IMR-90 (cell line): ENCODE measurements at regions of chr4 and their contacts with region 1.

Region 1: GRCh38 chr4:74133786-74134499 is 24.0 kb upstream of the MTHFD2L start:
- DNase-seq: peak; percentile 86
- ATAC-seq: peak; percentile 99
- H3K4me3 ChIP-seq: no peak overlapping the region
- H3K27ac ChIP-seq: no peak overlapping the region
- H3K4me1 ChIP-seq: no peaks in the 10 kb centered on the region
- H3K27me3 ChIP-seq: no peaks in the 10 kb centered on the region; the same call in 1 of the 2 replicates
- CTCF ChIP-seq: peak; percentile 94
- POLR2A ChIP-seq: peak; percentile 65
- RAD21 ChIP-seq: peak; percentile 97

Region 2: DNA sequence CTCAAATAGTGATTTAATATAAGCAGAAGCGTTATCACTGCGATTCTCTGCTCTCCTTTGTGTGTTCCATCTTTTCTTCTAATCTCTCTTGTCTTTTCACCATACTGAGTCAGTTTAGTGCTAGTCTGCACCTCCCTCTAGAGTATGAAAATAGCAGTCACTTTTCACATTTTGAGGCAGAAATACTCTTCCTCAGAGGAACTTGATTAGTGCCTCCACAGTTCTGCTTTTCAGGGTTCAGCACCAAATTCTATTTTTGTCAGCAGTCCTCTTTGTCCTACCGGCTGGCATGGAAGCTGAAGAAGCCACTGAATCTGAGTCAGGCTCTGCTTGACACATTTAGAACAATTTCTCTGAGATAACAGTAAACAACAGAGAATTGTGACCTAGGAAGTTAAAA is 825.7 kb before region 1 on chr4:
- CTCF ChIA-PET with region 1: no interaction called
- POLR2A ChIA-PET with region 1: no interaction called
- dilution Hi-C with region 1: no loop called
- in situ Hi-C with region 1: no loop called
- intact Hi-C with region 1: loop called (anchors 5 kb)
- DNase-seq: peak; percentile 61
- ATAC-seq: peak; percentile 59
- H3K4me3 ChIP-seq: no peak overlapping the region
- H3K27ac ChIP-seq: peak overlapping the region; percentile 84
- H3K4me1 ChIP-seq: peaks cover 4% of the 10 kb centered on the region
- H3K27me3 ChIP-seq: no peaks in the 10 kb centered on the region
- CTCF ChIP-seq: peak; percentile 64
- POLR2A ChIP-seq: no peak
- RAD21 ChIP-seq: peak; percentile 75

Region 3: GRCh38 chr4:73573794-73574406 is 560.0 kb before region 1 on chr4:
- CTCF ChIA-PET with region 1: interaction called, 4 read pairs
- POLR2A ChIA-PET with region 1: no interaction called
- dilution Hi-C with region 1: no loop called
- in situ Hi-C with region 1: no loop called
- intact Hi-C with region 1: loop called (anchors 1 kb)
- DNase-seq: peak; percentile 82
- ATAC-seq: peak; percentile 98
- H3K4me3 ChIP-seq: no peak overlapping the region
- H3K27ac ChIP-seq: no peak overlapping the region
- H3K4me1 ChIP-seq: no peaks in the 10 kb centered on the region
- H3K27me3 ChIP-seq: peaks cover 2% of the 10 kb centered on the region; the same call in 1 of the 2 replicates
- CTCF ChIP-seq: peak; percentile 88
- POLR2A ChIP-seq: no peak
- RAD21 ChIP-seq: peak; percentile 80

Region 4: DNA sequence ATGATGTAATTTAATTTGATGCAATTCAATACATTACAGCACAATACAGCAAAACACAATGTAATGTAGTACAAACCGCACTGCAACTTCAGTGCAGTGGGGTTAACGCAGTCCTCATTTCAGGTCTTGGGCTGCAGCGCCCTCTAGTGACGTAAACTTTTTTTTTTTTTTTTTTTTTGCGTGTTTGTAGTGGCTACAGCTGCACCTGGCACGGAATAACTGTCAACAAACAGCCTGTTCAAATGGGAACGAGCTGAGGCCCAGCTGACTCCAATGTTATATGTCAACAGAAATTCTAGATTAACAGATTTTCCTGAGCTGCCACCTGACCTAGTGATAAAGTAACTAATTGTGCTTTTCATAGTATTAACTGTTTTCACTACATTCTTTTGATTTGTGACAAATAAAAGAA is 480.2 kb before region 1 on chr4:
- CTCF ChIA-PET with region 1: no interaction called
- POLR2A ChIA-PET with region 1: no interaction called
- dilution Hi-C with region 1: no loop called
- in situ Hi-C with region 1: loop called (anchors 5 kb)
- intact Hi-C with region 1: no loop called
- DNase-seq: peak; percentile 62
- ATAC-seq: peak; percentile 69
- H3K4me3 ChIP-seq: no peak overlapping the region
- H3K27ac ChIP-seq: no peak overlapping the region
- H3K4me1 ChIP-seq: no peaks in the 10 kb centered on the region
- H3K27me3 ChIP-seq: peaks cover 3% of the 10 kb centered on the region; the same call in 1 of the 2 replicates
- CTCF ChIP-seq: peak; percentile 76
- POLR2A ChIP-seq: no peak
- RAD21 ChIP-seq: peak; percentile 90

Region 5: GRCh38 chr4:73729534-73730165 is 404.3 kb before region 1 on chr4:
- CTCF ChIA-PET with region 1: no interaction called
- POLR2A ChIA-PET with region 1: no interaction called
- dilution Hi-C with region 1: no loop called
- in situ Hi-C with region 1: no loop called
- intact Hi-C with region 1: loop called (anchors 1 kb)
- DNase-seq: peak; percentile 92
- ATAC-seq: peak; percentile 93
- H3K4me3 ChIP-seq: no peak overlapping the region
- H3K27ac ChIP-seq: no peak overlapping the region
- H3K4me1 ChIP-seq: peaks cover 10% of the 10 kb centered on the region
- H3K27me3 ChIP-seq: no peaks in the 10 kb centered on the region
- CTCF ChIP-seq: peak; percentile 84
- POLR2A ChIP-seq: no peak
- RAD21 ChIP-seq: peak; percentile 73

Region 6: DNA sequence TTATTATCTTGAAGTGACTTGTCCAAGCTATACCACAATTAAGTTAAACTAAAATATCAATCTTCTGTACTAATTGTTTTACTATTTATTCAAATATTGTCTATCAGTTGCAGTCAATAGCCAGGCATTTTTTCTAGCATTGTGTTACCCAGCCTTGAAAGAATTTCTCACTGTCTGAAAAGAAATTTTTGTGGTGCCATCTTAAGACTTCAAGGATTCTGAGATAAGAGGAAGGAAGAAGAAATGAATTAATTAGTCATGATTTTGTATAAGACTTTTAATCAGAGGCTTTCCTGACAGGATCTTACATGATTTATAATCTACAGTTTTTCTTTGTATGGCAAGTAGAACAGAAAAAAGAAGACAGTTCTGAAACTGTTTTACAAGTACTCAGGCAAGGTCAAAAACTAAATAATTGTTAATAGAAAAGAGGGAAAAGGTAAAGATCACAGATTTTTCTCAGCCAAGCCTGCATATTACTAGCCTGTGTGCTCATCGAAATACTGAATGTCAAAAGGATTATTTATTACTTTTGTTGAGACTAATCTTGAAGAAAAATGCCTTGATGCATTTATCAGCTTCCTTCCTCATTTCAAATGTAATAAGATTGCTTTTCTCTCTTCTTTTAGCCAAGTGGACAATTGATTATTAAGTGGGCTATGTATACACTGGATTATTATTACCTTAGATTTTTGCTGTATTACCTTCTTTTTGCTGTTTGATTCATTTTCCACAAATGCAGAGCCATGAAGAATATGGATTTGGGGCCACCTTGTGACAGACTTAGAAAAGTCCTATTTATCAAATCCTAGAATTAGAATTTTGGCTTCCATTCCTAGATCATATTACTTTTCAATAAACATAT is 210.9 kb before region 1 on chr4:
- CTCF ChIA-PET with region 1: no interaction called
- POLR2A ChIA-PET with region 1: no interaction called
- dilution Hi-C with region 1: no loop called
- in situ Hi-C with region 1: no loop called
- intact Hi-C with region 1: loop called (anchors 1 kb)
- DNase-seq: peak; percentile 59
- ATAC-seq: no peak; the same call in 1 of the 2 replicates
- H3K4me3 ChIP-seq: no peak overlapping the region
- H3K27ac ChIP-seq: no peak overlapping the region
- H3K4me1 ChIP-seq: peaks cover 6% of the 10 kb centered on the region
- H3K27me3 ChIP-seq: peaks cover 8% of the 10 kb centered on the region
- CTCF ChIP-seq: peak; percentile 61
- POLR2A ChIP-seq: no peak
- RAD21 ChIP-seq: peak; percentile 76

Region 7: DNA sequence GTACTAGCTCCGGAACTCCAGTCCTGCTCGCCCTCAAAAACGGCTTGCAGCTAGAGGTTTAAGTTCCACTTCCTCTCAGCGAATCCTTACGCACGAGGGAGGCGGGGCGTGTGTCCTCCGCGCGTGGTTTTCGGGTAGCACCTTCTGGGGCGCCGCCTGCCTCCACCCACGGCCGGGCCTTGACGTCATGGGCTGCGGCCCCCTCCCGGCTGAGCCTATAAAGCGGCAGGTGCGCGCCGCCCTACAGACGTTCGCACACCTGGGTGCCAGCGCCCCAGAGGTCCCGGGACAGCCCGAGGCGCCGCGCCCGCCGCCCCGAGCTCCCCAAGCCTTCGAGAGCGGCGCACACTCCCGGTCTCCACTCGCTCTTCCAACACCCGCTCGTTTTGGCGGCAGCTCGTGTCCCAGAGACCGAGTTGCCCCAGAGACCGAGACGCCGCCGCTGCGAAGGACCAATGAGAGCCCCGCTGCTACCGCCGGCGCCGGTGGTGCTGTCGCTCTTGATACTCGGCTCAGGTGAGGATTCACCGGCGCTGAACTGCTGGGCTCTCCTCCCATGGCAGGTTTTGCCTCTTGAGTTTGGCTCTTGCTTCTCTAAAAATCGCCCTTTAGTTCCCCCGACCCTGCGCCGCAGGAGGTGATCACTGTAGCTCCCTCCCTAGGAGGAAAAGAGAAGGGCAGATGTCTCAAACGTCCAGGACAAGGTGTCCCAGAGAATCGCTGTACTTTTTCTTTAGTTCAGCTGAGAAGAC is 311.1 kb after region 1 on chr4 and contains the start of gene AREG:
- CTCF ChIA-PET with region 1: no interaction called
- POLR2A ChIA-PET with region 1: no interaction called
- dilution Hi-C with region 1: no loop called
- in situ Hi-C with region 1: no loop called
- intact Hi-C with region 1: no loop called
- DNase-seq: peak; percentile 41
- ATAC-seq: peak; percentile 90
- H3K4me3 ChIP-seq: peak within 1 kb of the TSS; percentile 90
- H3K27ac ChIP-seq: peak within 1 kb of the TSS; percentile 64; the same call in 1 of the 2 replicates
- H3K4me1 ChIP-seq: 0 out of 2 replicates have a peak, but pooled peaks cover 2% of the 10 kb centered on the region
- H3K27me3 ChIP-seq: no peaks in the 10 kb centered on the region
- CTCF ChIP-seq: peak; percentile 57
- POLR2A ChIP-seq: no peak
- RAD21 ChIP-seq: peak; percentile 49
- total RNA-seq, gene AREG: 0.18 and 0.28 TPM in 2 replicates

Region 8: DNA sequence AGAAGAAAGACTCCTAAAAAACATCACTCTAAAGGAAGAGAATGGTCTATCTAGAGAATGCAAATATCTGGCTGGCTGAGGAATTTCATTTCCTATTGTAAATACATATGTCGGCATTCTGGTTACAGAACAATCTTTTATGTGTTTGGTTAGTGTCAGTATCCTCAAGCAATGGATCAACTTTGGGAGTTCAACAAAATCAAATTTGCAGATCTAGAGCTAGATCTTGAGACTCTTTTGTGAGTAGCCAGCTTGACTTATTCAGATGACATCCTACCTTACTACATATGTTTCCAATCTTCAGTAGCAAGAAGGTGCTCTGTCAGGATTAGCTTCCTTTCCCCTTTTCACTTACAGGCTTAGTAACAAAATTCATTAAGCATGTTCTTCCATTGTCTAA is 515.3 kb after region 1 on chr4:
- CTCF ChIA-PET with region 1: no interaction called
- POLR2A ChIA-PET with region 1: no interaction called
- dilution Hi-C with region 1: no loop called
- in situ Hi-C with region 1: no loop called
- intact Hi-C with region 1: no loop called
- DNase-seq: no peak
- ATAC-seq: no peak
- H3K4me3 ChIP-seq: no peak overlapping the region
- H3K27ac ChIP-seq: no peak overlapping the region
- H3K4me1 ChIP-seq: no peaks in the 10 kb centered on the region
- H3K27me3 ChIP-seq: no peaks in the 10 kb centered on the region
- CTCF ChIP-seq: no peak
- POLR2A ChIP-seq: no peak
- RAD21 ChIP-seq: no peak